GM10248 (cell line): ENCODE measurements at regions of chr17 and their contacts with region 1.

Region 1: GRCh38 chr17:42027961-42028790 is 8.3 kb downstream of the NKIRAS2 start:
- DNase-seq: no peak
- CTCF ChIP-seq: no peak

Region 2: GRCh38 chr17:41972571-41973411 is 55.4 kb before region 1 on chr17:
- CTCF ChIA-PET with region 1: no interaction called
- POLR2A ChIA-PET with region 1: no interaction called
- DNase-seq: no peak
- CTCF ChIP-seq: no peak

Region 3: DNA sequence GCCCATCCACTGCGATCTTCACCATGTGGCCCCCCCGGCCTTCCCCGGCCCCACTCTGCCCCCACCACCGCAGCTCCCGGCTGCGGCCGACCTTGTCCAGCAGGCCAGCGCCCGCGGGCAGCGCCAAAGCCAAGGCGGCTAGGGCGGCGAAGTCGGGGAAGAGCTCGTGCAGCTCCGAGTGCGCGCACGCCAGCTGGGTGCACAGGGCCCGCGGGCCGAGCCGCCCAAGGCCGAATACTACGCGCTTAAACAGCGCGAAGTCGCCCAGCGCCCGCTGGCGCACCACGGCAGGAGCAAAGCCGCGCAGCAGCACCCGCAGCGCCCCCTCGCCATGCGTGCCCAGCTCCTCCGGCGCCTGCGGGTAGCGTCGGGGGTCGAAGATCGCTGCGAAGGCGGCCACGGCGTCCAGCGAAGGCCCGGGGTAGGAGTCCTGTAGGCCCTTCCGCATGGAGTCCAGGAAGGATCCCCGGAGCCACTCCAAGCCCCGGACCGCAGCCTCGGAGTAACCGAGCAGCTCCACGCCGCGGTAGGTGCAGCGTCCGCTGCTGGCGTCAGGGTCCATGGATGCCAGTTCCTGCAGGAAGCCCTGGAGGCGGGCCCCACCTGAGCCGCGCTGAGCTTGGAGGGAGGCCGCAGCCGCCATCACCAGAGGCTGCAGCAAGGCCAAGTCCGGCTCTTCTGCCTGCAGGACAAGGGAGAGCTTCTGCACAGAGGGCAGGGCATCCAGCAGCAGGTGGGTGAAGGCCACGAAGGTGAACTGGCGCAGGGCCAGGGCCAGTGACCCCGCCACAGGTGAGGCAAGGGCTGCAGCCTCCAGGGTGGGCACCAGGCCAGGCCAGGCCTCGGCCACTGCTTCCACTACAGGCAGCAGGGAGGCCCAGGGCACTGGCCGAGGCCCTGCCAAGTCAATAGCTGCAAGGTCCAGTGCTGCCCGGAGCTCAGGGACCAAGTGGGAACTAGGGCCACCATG is 11.9 kb after region 1 on chr17:
- CTCF ChIA-PET with region 1: interaction called, 77 read pairs
- POLR2A ChIA-PET with region 1: interaction called, 4 read pairs
- DNase-seq: no peak
- CTCF ChIP-seq: no peak

Region 4: GRCh38 chr17:42112552-42113176 is 84.5 kb after region 1 on chr17 and contains the start of gene DHX58:
- CTCF ChIA-PET with region 1: interaction called, 14 read pairs
- POLR2A ChIA-PET with region 1: interaction called, 3 read pairs
- DNase-seq: peak; percentile 93
- CTCF ChIP-seq: no peak

Region 5: DNA sequence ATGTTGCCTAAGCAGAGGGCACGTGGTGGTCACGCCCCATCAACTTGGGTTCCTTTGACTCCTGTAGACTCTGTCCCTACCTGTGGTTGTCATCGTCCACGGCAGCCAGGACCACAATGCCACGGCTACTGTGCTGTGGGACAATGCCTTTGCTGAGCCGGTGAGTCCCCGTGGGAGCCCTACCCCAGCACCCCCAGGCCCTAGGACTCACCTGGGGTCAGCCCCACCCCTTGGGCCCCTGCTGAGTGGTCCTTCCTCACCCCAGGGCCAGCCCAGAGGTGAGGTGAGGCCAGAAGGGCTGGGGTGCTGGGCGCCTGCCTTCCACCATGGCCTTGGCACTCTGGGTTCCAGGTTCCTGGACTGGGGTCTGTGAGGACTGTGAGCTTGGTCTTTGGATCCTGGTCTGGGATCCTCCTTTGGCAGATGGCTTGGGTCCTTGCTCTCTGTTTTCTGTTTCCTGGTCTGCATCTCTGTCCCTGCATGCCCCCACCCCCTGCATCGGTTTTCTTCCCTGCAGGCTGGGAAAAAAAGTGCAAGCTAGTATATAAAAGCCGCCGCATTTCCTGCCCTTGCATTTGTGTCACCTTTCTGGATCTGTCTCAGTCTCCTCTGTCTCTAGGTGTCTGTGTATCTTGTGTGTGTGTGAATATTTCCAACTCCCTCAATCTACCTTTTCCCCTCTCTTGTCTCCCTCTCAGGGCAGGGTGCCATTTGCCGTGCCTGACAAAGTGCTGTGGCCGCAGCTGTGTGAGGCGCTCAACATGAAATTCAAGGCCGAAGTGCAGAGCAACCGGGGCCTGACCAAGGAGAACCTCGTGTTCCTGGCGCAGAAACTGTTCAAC is 277.6 kb after region 1 on chr17:
- CTCF ChIA-PET with region 1: no interaction called
- POLR2A ChIA-PET with region 1: no interaction called
- DNase-seq: no peak
- CTCF ChIP-seq: no peak